ENCODE measurements at regions of chr11 and their contacts with region 1.

Region 1: GRCh38 chr11:126480410-126481302 is 125.2 kb downstream of the ST3GAL4 start:
- DNase-seq: peak; percentile 83
- ATAC-seq: peak; percentile 92
- H3K4me3 ChIP-seq: peak overlapping the region in 3 of 5 experiments; percentile 26 to 46 (median 37)
- H3K4me3 Mint-ChIP-seq: peak overlapping the region; percentile 76
- H3K27ac ChIP-seq: no peak overlapping the region
- H3K27ac Mint-ChIP-seq: peak overlapping the region; percentile 0
- H3K4me1 ChIP-seq: peaks cover 4 to 16% of the 10 kb centered on the region in 2 donors
- H3K4me1 Mint-ChIP-seq: peaks cover 16% of the 10 kb centered on the region
- H3K27me3 ChIP-seq: no peaks in the 10 kb centered on the region
- H3K27me3 Mint-ChIP-seq: peaks cover 9% of the 10 kb centered on the region
- CTCF ChIP-seq: peak; percentile 99

Region 2: DNA sequence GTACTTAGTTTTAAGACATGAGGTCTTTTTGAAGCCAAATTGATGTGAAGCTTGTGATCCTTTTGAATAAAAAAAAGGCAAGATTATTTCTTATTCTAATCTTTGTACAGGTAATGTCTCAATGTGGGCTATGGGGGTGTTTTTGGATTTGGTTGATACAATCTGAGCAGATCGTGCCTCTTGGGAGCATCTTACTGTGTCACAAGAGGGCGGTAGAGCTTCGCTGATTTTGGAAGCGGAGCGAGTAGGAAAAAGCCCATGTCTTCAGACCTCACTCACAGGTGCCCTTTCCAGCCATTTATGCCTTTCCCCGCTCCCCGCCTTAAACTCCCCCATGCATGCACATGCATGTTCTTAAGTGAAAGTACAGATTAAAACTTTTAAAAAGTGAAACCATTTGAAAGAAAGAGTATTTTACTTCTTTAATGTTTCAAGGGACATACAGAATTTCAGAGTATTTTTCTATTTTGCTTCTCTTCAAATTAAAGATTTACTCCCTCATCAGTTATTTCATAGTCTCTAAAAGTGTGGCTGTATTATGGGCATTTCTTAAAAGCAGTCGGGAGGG is 557.6 kb before region 1 on chr11:
- CTCF ChIA-PET with region 1: interaction called, 9 read pairs
- POLR2A ChIA-PET with region 1: no interaction called
- intact Hi-C with region 1: loop called (anchors 2 kb)
- DNase-seq: peak; percentile 61
- ATAC-seq: peak; percentile 43
- H3K4me3 ChIP-seq: no peak overlapping the region
- H3K4me3 Mint-ChIP-seq: no peak overlapping the region
- H3K27ac ChIP-seq: no peak overlapping the region
- H3K27ac Mint-ChIP-seq: no peak overlapping the region
- H3K4me1 ChIP-seq: no peaks in the 10 kb centered on the region
- H3K4me1 Mint-ChIP-seq: peaks cover 2% of the 10 kb centered on the region
- H3K27me3 ChIP-seq: peaks cover 0 to 11% (median 1%) of the 10 kb centered on the region in 4 experiments
- H3K27me3 Mint-ChIP-seq: peaks cover 42% of the 10 kb centered on the region
- CTCF ChIP-seq: peak; percentile 72

Region 3: DNA sequence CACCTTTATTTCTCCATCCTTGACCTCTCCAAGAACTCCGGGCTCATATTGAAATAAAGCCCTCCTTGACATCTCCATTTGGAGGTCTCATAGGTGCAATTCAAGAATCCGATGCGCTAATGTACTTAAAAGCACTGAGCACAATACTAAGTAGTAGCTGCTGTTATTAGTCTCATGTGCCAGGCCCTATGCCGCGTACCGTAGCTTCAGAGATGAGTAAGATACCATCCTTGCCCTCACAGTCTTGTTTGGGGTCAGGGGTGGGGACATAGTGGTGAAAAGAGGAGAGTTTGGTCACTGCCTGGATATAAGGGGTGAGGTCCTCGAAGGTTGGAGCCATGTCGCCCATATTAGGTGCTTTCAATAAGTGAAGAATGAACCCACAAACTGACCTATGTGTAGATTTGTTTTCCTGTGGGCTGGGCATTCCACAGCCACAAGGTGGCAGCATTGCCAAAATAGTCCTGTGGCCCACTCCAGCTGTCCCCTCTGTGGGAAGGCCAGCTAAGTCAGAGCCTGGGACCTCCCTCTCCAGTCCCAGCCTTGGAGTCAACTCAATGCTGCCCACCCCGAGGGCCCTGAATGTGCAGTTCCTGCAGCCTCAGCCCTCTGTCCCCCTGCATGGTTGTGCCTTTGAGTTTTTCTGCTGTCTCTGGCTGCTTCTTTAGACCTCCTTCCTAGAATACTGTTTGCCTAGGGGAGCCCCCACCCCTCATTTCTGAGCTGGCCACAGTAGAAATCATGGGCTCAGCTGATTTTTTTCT is 170.2 kb before region 1 on chr11:
- CTCF ChIA-PET with region 1: interaction called, 55 read pairs
- POLR2A ChIA-PET with region 1: no interaction called
- intact Hi-C with region 1: loop called (anchors 1 kb)
- DNase-seq: peak; percentile 56
- ATAC-seq: peak; percentile 67
- H3K4me3 ChIP-seq: no peak overlapping the region
- H3K4me3 Mint-ChIP-seq: no peak overlapping the region
- H3K27ac ChIP-seq: no peak overlapping the region
- H3K27ac Mint-ChIP-seq: no peak overlapping the region
- H3K4me1 ChIP-seq: peaks cover 5 to 22% of the 10 kb centered on the region in 2 donors
- H3K4me1 Mint-ChIP-seq: peaks cover 26% of the 10 kb centered on the region
- H3K27me3 ChIP-seq: no peaks in the 10 kb centered on the region
- H3K27me3 Mint-ChIP-seq: no peaks in the 10 kb centered on the region
- CTCF ChIP-seq: peak; percentile 78

Region 4: DNA sequence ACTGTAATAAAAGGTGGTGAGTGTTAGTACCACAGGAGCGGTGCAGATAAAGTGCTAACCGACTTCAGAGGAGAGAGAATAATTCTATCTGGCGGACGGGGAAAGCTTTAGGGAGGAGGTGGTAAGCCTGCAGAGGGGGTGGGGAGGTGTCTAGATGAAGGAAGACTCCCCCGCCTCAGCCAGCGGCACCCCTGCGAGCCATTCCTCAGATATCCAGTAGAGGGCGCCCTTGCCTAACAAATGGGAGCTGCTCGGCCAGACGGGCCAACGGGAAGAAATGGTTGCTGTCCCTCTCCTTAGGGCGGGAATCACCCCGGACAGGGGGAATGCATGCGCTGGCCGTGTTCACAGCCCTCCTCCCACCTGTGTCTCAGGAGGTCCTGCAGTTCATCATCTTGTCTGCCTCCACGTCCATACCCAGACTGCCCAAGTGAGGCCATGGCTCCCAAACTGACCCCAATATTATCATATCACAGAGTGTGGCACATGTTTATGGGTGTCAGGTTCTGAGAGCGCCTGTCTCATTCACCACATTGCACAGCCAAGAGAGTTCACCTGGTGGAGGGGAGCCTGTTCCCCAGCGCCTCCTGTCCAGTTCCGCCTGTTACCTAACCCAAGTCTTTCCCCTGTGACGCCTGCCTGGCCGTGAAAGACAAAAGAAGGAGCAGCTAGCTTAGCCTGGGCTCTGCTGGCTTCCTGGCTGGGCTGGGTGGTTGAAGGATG is 39.7 kb before region 1 on chr11:
- CTCF ChIA-PET with region 1: interaction called, 159 read pairs
- POLR2A ChIA-PET with region 1: interaction called, 3 read pairs
- intact Hi-C with region 1: loop called (anchors 1 kb)
- DNase-seq: peak; percentile 77
- ATAC-seq: peak; percentile 69
- H3K4me3 ChIP-seq: no peak overlapping the region
- H3K4me3 Mint-ChIP-seq: no peak overlapping the region
- H3K27ac ChIP-seq: no peak overlapping the region
- H3K27ac Mint-ChIP-seq: no peak overlapping the region
- H3K4me1 ChIP-seq: peaks cover 0 to 5% of the 10 kb centered on the region in 2 donors
- H3K4me1 Mint-ChIP-seq: peaks cover 2% of the 10 kb centered on the region
- H3K27me3 ChIP-seq: peaks cover 0 to 16% (median 3%) of the 10 kb centered on the region in 4 experiments
- H3K27me3 Mint-ChIP-seq: peaks cover 14% of the 10 kb centered on the region
- CTCF ChIP-seq: peak; percentile 94

Region 5: GRCh38 chr11:126460417-126461095 is 20.1 kb before region 1 on chr11:
- CTCF ChIA-PET with region 1: interaction called, 23 read pairs
- POLR2A ChIA-PET with region 1: no interaction called
- intact Hi-C with region 1: no loop called
- DNase-seq: no peak
- ATAC-seq: no peak
- H3K4me3 ChIP-seq: no peak overlapping the region
- H3K4me3 Mint-ChIP-seq: no peak overlapping the region
- H3K27ac ChIP-seq: no peak overlapping the region
- H3K27ac Mint-ChIP-seq: no peak overlapping the region
- H3K4me1 ChIP-seq: peaks cover 13 to 22% of the 10 kb centered on the region in 2 donors
- H3K4me1 Mint-ChIP-seq: peaks cover 13% of the 10 kb centered on the region
- H3K27me3 ChIP-seq: peaks cover 0 to 11% (median 1%) of the 10 kb centered on the region in 4 experiments
- H3K27me3 Mint-ChIP-seq: peaks cover 12% of the 10 kb centered on the region
- CTCF ChIP-seq: no peak

Region 6: GRCh38 chr11:126465573-126466188 is 15.0 kb before region 1 on chr11:
- CTCF ChIA-PET with region 1: interaction called, 23 read pairs
- POLR2A ChIA-PET with region 1: no interaction called
- intact Hi-C with region 1: no loop called
- DNase-seq: peak; percentile 60
- ATAC-seq: peak; percentile 63
- H3K4me3 ChIP-seq: peak overlapping the region in 4 of 5 experiments; percentile 4 to 23 (median 14)
- H3K4me3 Mint-ChIP-seq: peak overlapping the region; percentile 75
- H3K27ac ChIP-seq: peak overlapping the region; percentile 34 to 56
- H3K27ac Mint-ChIP-seq: peak overlapping the region; percentile 67
- H3K4me1 ChIP-seq: peaks cover 46 to 52% of the 10 kb centered on the region in 2 donors
- H3K4me1 Mint-ChIP-seq: peaks cover 33% of the 10 kb centered on the region
- H3K27me3 ChIP-seq: peaks cover 0 to 11% (median 0%) of the 10 kb centered on the region in 4 experiments
- H3K27me3 Mint-ChIP-seq: no peaks in the 10 kb centered on the region
- CTCF ChIP-seq: no peak